ENCODE measurements at regions of chr9 and their contacts with region 1.

Region 1: GRCh38 chr9:36102742-36103495 is 33.6 kb upstream of the GLIPR2 start:
- DNase-seq: peak; percentile 71
- ATAC-seq: no peak
- H3K4me3 ChIP-seq: no peak overlapping the region
- H3K27ac ChIP-seq: peak overlapping the region; percentile 90
- H3K4me1 ChIP-seq: peaks cover 13% of the 10 kb centered on the region
- H3K27me3 ChIP-seq: no peaks in the 10 kb centered on the region
- CTCF ChIP-seq: peak; percentile 49
- POLR2A ChIP-seq: no peak
- RAD21 ChIP-seq: peak; percentile 47

Region 2: GRCh38 chr9:35954942-35955546 is 147.9 kb before region 1 on chr9:
- CTCF ChIA-PET with region 1: interaction called, 3 read pairs
- POLR2A ChIA-PET with region 1: no interaction called
- dilution Hi-C with region 1: no loop called
- in situ Hi-C with region 1: no loop called
- intact Hi-C with region 1: loop called (anchors 5 kb)
- DNase-seq: peak; percentile 90
- ATAC-seq: peak; percentile 91
- H3K4me3 ChIP-seq: no peak overlapping the region
- H3K27ac ChIP-seq: no peak overlapping the region
- H3K4me1 ChIP-seq: peaks cover 13% of the 10 kb centered on the region
- H3K27me3 ChIP-seq: no peaks in the 10 kb centered on the region
- CTCF ChIP-seq: peak; percentile 91
- POLR2A ChIP-seq: 0 out of 2 replicates have a peak, but pooled peaks have one; percentile 54
- RAD21 ChIP-seq: peak; percentile 95

Region 3: GRCh38 chr9:36045610-36046009 is 57.3 kb before region 1 on chr9:
- CTCF ChIA-PET with region 1: no interaction called
- POLR2A ChIA-PET with region 1: interaction called, 17 read pairs
- dilution Hi-C with region 1: no loop called
- in situ Hi-C with region 1: no loop called
- intact Hi-C with region 1: no loop called
- DNase-seq: no peak
- ATAC-seq: no peak
- H3K4me3 ChIP-seq: no peak overlapping the region
- H3K27ac ChIP-seq: no peak overlapping the region
- H3K4me1 ChIP-seq: peaks cover 16% of the 10 kb centered on the region
- H3K27me3 ChIP-seq: no peaks in the 10 kb centered on the region
- CTCF ChIP-seq: no peak
- POLR2A ChIP-seq: no peak
- RAD21 ChIP-seq: no peak

Region 4: DNA sequence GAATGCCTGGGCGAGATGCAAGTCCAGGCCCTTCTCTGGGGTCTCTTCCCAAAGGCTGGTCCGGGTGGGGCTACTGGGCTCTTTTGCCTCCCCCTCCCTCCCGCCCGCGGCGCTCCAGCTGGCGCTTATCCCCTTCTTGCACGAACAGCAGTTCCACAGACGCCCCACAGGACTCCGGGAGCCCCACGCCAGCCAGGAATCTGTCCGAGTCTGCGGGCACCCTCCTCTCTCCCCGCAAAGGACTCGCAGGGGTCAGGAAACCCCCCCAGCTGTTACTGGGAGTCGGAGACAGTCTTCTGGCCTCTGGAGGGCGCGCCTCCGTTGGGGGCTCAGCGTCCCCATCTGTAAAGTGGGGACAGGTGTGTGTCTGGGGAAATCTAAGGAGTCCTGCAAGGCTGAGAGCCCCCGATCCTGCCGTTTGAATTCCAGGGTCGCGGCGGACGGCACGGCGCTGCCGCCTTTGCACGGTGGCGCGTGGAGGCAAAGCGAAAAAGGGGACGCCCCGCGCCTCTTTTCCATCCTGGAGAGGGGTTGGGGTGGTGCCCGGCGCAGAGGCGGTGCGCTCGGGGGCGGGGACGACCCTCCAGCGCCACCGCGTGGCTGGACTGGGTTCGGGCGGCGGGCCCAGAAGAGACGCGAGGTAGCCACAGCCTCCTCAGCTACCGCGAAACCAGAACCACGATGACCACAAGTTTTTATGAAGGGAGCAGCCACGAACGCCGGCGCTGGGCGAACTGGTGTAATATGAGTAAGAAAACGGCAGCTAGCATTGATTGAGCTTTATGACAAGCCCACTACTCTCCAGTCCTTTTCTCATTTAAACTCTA is 63.4 kb after region 1 on chr9:
- CTCF ChIA-PET with region 1: interaction called, 3 read pairs
- POLR2A ChIA-PET with region 1: no interaction called
- dilution Hi-C with region 1: no loop called
- in situ Hi-C with region 1: no loop called
- intact Hi-C with region 1: loop called (anchors 1 kb)
- DNase-seq: peak; percentile 81
- ATAC-seq: peak; percentile 91
- H3K4me3 ChIP-seq: peak overlapping the region; percentile 55
- H3K27ac ChIP-seq: peak overlapping the region; percentile 35
- H3K4me1 ChIP-seq: peaks cover 29% of the 10 kb centered on the region
- H3K27me3 ChIP-seq: no peaks in the 10 kb centered on the region; the same call in 1 of the 2 replicates
- CTCF ChIP-seq: peak; percentile 92
- POLR2A ChIP-seq: 0 out of 2 replicates have a peak, but pooled peaks have one; percentile 28
- RAD21 ChIP-seq: peak; percentile 93

Region 5: GRCh38 chr9:36190388-36191287 is 87.7 kb after region 1 on chr9 and contains the start of gene CLTA:
- CTCF ChIA-PET with region 1: no interaction called
- POLR2A ChIA-PET with region 1: no interaction called
- dilution Hi-C with region 1: no loop called
- in situ Hi-C with region 1: no loop called
- intact Hi-C with region 1: loop called (anchors 5 kb)
- DNase-seq: peak; percentile 99
- ATAC-seq: peak; percentile 93
- H3K4me3 ChIP-seq: peak within 1 kb of the TSS; percentile 74
- H3K27ac ChIP-seq: peak within 1 kb of the TSS; percentile 93
- H3K4me1 ChIP-seq: peaks cover 15% of the 10 kb centered on the region
- H3K27me3 ChIP-seq: no peaks in the 10 kb centered on the region
- CTCF ChIP-seq: peak; percentile 60
- POLR2A ChIP-seq: peak; percentile 99
- RAD21 ChIP-seq: peak; percentile 25; the same call in 1 of the 2 replicates
- total RNA-seq, gene CLTA: 133 and 208 TPM in 2 replicates

Region 6: DNA sequence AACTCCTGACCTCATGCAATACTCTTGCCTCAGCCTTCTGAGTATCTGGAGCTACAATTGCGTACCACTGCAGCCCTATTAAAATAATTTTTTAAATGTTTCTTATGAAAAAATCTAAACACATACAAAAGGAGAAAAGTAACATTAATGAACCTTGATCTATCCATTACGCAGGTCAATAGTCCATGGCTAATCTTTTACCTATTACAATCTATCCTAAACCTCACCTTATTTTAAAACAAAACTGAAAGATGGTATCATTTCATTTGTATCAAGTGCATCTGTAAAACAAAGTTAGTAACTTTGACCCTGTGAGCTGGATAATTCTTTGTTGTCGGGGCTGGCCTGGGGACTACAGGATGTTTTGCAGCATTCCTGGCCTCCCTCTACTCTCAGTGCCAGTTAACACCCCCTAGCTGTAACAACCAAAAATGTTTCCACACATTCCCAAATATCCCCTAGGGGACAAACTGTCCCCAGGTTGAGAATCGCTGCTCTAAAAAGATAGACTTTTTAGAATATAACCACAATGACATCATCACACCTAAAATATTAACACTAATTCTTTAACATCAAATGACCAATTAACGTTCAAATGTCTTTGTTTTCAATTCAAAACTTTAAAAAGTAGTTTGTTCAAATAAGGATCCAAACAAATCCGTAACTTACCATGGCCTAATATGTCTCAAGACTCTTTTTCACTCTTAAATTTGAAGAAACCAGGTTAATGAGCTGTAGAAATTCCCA is 242.4 kb after region 1 on chr9:
- CTCF ChIA-PET with region 1: no interaction called
- POLR2A ChIA-PET with region 1: no interaction called
- dilution Hi-C with region 1: no loop called
- in situ Hi-C with region 1: no loop called
- intact Hi-C with region 1: no loop called
- DNase-seq: no peak
- ATAC-seq: no peak
- H3K4me3 ChIP-seq: no peak overlapping the region
- H3K27ac ChIP-seq: no peak overlapping the region
- H3K4me1 ChIP-seq: no peaks in the 10 kb centered on the region
- H3K27me3 ChIP-seq: no peaks in the 10 kb centered on the region
- CTCF ChIP-seq: no peak
- POLR2A ChIP-seq: no peak
- RAD21 ChIP-seq: no peak

Region 7: GRCh38 chr9:36423206-36423605 is 320.3 kb after region 1 on chr9:
- CTCF ChIA-PET with region 1: no interaction called
- POLR2A ChIA-PET with region 1: no interaction called
- dilution Hi-C with region 1: no loop called
- in situ Hi-C with region 1: no loop called
- intact Hi-C with region 1: no loop called
- DNase-seq: no peak
- ATAC-seq: no peak
- H3K4me3 ChIP-seq: no peak overlapping the region
- H3K27ac ChIP-seq: no peak overlapping the region
- H3K4me1 ChIP-seq: peaks cover 6% of the 10 kb centered on the region
- H3K27me3 ChIP-seq: no peaks in the 10 kb centered on the region
- CTCF ChIP-seq: no peak
- POLR2A ChIP-seq: no peak
- RAD21 ChIP-seq: no peak

Measured in IMR-90 (cell line).